Naive thymus-derived CD4-positive, alpha-beta T cell (primary cell): ENCODE measurements at regions of chr20 and their contacts with region 1.

Region 1: GRCh38 chr20:25195014-25195961 is at the start of gene ENTPD6:
- DNase-seq: peak; percentile 88 to 99 (median 94)
- ATAC-seq: peak; percentile 89
- H3K4me3 ChIP-seq: peak within 1 kb of the TSS; percentile 85
- H3K4me3 Mint-ChIP-seq: peak within 1 kb of the TSS; percentile 81 to 97 (median 92)
- H3K27ac ChIP-seq: peak within 1 kb of the TSS; percentile 91
- H3K27ac Mint-ChIP-seq: peak within 1 kb of the TSS; percentile 75 to 96 (median 93)
- H3K4me1 ChIP-seq: peaks cover 19 to 29% of the 10 kb centered on the region in 2 donors
- H3K4me1 Mint-ChIP-seq: peaks cover 23 to 56% (median 44%) of the 10 kb centered on the region in 7 donors
- H3K27me3 ChIP-seq: no peaks in the 10 kb centered on the region
- H3K27me3 Mint-ChIP-seq: peaks cover 0 to 6% (median 0%) of the 10 kb centered on the region in 5 donors
- total RNA-seq, gene ENTPD6: 41.1 to 108 (median 74.4) TPM

Region 2: DNA sequence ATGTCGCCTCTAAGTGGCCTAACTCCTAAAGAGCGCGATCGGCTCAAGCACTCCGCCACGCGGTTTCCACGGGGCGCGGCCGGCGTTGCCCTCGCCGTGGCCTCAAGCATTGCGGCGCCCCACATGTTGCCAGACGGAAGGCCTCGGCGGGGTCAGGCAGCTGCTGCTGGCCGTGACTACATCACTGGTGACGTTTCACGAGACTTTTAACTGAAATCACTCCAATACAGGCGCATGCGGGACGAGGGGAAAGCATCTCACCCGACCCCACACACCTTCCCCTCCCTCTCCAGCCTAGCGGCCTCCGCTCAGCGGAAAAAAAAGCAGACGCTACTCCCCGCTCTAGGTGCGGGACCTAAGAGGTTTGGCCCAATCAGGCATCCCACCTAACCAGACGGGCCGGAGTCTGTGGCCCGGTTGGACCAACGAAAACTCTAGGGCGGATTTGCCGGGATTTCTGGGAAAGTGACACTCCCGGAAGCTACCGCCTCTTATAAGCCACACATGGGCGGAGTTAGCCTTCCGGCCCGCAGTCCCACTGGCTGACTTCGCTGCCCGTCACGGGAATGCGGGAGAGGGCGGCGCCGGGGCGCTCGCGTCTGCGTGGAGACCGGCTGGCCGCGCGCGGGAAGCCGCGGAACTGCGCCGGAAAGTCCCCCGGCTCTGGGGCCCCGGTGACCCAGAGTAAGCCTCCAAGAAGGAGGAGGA is 1844.9 kb before region 1 on chr20 and contains the start of gene NXT1:
- CTCF ChIA-PET with region 1: no interaction called
- POLR2A ChIA-PET with region 1: no interaction called
- intact Hi-C with region 1: loop called in 1 of 2 experiments (anchors 2 kb)
- DNase-seq: peak; percentile 92 to 98 (median 95)
- ATAC-seq: peak; percentile 91
- H3K4me3 ChIP-seq: peak within 1 kb of the TSS; percentile 99
- H3K4me3 Mint-ChIP-seq: peak within 1 kb of the TSS; percentile 84 to 100 (median 98)
- H3K27ac ChIP-seq: peak within 1 kb of the TSS; percentile 99
- H3K27ac Mint-ChIP-seq: peak within 1 kb of the TSS; percentile 98 to 100 (median 100)
- H3K4me1 ChIP-seq: peaks cover 19 to 20% of the 10 kb centered on the region in 2 donors
- H3K4me1 Mint-ChIP-seq: peaks cover 12 to 36% (median 26%) of the 10 kb centered on the region in 7 donors
- H3K27me3 ChIP-seq: no peaks in the 10 kb centered on the region
- H3K27me3 Mint-ChIP-seq: peaks cover 0 to 2% (median 0%) of the 10 kb centered on the region in 5 donors
- total RNA-seq, gene NXT1: 20.1 to 63.4 (median 39.7) TPM

Region 3: GRCh38 chr20:25057234-25058050 is 137.8 kb before region 1 on chr20:
- CTCF ChIA-PET with region 1: no interaction called
- POLR2A ChIA-PET with region 1: interaction called, 7 read pairs
- intact Hi-C with region 1: loop called (anchors 1 to 5 kb)
- DNase-seq: peak; percentile 67 to 86 (median 74)
- ATAC-seq: peak; percentile 77
- H3K4me3 ChIP-seq: peak overlapping the region; percentile 86
- H3K4me3 Mint-ChIP-seq: peak overlapping the region; percentile 81 to 90 (median 88)
- H3K27ac ChIP-seq: peak overlapping the region; percentile 87
- H3K27ac Mint-ChIP-seq: peak overlapping the region; percentile 72 to 94 (median 88)
- H3K4me1 ChIP-seq: peaks cover 33 to 48% of the 10 kb centered on the region in 2 donors
- H3K4me1 Mint-ChIP-seq: peaks cover 38 to 63% (median 47%) of the 10 kb centered on the region in 7 donors
- H3K27me3 ChIP-seq: no peaks in the 10 kb centered on the region
- H3K27me3 Mint-ChIP-seq: peaks cover 0 to 29% (median 0%) of the 10 kb centered on the region in 5 donors

Region 4: DNA sequence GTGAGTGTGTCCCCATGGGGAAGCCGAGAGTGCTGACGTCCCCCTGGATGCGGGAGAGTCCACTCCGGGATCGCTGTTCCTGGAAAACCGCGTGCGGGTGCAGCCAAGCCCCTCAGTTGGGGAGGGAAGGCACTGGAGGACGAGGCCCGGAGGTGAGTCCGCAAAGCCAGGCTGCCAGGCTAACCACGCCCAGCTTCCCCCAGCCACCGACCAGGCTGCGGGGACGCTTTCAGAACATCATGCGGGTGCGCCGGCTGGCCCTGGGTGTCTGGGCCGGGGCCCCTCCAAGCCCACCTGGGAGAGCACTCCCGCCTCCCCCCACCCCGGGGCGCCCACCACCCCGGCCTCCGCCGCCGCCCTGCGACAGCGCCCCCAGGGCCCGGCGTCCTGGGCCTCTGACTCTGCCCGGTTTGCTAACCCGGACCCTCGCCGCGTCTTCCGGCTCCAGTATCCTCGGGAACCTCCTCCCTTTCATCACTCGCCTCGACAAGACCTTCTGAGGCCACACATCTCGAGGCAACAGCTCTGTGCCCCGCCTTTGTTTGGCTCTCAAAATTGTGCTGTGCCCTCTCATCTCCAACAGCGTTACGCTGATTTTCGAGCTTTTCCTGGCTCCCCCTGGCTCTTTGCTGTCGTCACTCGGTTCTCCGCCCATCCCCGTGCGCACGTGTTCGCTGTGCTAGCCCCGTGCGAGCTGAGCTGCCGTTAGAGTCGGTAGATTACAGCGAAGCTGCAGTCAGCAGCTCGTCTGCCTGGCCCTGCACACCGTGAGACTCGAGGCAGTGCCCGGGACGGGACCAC is 46.9 kb before region 1 on chr20:
- CTCF ChIA-PET with region 1: no interaction called
- POLR2A ChIA-PET with region 1: interaction called, 9 read pairs
- intact Hi-C with region 1: loop called in 1 of 2 experiments (anchors 2 kb)
- DNase-seq: peak; percentile 35 to 82 (median 79)
- ATAC-seq: peak; percentile 94
- H3K4me3 ChIP-seq: peak overlapping the region; percentile 65
- H3K4me3 Mint-ChIP-seq: peak overlapping the region; percentile 84 to 97 (median 90)
- H3K27ac ChIP-seq: peak overlapping the region; percentile 38
- H3K27ac Mint-ChIP-seq: peak overlapping the region in 8 of 9 donors; percentile 73 to 99 (median 90)
- H3K4me1 ChIP-seq: peaks cover 0 to 12% of the 10 kb centered on the region in 2 donors
- H3K4me1 Mint-ChIP-seq: peaks cover 5 to 7% (median 6%) of the 10 kb centered on the region in 7 donors
- H3K27me3 ChIP-seq: no peaks in the 10 kb centered on the region
- H3K27me3 Mint-ChIP-seq: peaks cover 4 to 30% (median 8%) of the 10 kb centered on the region in 5 donors

Region 5: DNA sequence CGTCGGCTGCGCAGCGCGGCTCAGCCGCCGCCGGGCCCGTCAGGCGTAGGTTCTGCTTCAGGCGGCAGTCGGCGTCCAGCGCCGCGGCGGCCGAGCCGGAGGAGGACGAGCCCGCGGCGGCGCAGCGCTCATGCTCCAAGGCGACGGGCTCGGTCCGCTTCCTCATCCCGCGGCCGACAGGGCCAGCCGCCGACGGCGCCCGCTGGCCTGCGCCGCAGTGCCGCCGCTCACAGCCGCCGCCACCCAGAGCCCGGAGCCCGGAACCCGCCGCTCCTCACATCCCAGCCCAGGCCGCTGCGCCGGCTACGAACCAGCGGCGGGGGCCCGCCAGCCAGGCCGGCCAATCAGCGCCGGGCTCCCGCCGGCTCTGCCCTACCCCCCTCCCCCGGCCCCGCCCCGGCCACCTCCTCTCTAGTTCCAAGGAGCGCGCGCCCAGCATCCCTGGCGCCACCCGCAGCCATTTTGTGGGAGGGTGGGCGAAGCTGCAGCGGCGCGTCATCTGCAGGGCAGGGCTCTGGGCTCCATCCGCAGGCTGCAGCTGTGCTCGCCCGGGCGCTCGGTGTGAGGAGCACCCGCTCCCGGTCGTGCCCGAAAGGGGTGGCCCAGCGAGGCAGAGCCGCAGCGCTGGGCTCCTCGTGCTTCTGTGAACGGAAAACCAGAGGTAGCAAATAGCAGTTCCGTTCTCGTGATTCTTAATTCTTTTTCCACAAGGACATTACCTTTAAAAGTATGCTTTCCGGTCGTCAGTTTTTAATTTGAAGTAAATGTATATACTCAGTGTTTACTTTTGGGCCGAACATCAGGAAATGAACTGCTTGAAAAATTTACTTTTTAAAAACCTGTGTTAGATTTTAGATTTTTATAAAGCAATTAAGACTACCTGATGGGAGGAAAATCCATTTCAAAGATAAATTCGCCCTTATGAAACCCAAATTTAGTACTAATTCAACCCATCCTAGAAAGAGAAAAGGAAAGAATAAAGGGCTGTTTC is 195.5 kb after region 1 on chr20 and contains the start of gene ABHD12:
- CTCF ChIA-PET with region 1: no interaction called
- POLR2A ChIA-PET with region 1: interaction called, 3 read pairs
- intact Hi-C with region 1: loop called (anchors 1 to 2 kb)
- DNase-seq: peak; percentile 80 to 93 (median 89)
- ATAC-seq: peak; percentile 96
- H3K4me3 ChIP-seq: peak within 1 kb of the TSS; percentile 62
- H3K4me3 Mint-ChIP-seq: peak within 1 kb of the TSS; percentile 83 to 94 (median 88)
- H3K27ac ChIP-seq: peak within 1 kb of the TSS; percentile 74
- H3K27ac Mint-ChIP-seq: peak within 1 kb of the TSS; percentile 46 to 96 (median 82)
- H3K4me1 ChIP-seq: no peaks in the 10 kb centered on the region
- H3K4me1 Mint-ChIP-seq: peaks cover 5 to 22% (median 18%) of the 10 kb centered on the region in 7 donors
- H3K27me3 ChIP-seq: no peaks in the 10 kb centered on the region
- H3K27me3 Mint-ChIP-seq: peaks cover 0 to 6% (median 0%) of the 10 kb centered on the region in 5 donors
- total RNA-seq, gene ABHD12: 16.5 to 27.6 (median 22.5) TPM

Region 6: DNA sequence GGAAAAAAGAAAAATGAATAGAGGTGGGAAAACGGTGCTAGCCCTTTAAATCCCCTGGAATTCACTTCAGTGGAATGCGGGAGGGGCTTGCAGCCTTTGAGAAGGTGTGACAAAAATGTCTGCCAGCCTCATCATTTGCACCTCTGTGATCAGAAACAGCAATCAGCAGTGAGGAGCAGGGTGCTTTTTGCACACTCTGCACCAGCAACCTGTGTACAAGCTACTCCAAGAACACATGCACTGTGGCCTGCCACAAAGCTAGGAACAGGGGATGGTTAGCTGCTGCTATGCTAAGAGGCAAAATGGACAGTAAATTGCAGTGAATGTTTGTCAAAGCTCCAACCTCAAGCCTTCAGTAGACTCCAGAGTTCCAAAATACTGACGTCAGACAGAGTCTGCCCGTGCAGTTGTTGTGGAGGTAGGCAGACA is 241.9 kb after region 1 on chr20:
- CTCF ChIA-PET with region 1: no interaction called
- POLR2A ChIA-PET with region 1: no interaction called
- intact Hi-C with region 1: no loop called
- DNase-seq: no peak
- ATAC-seq: no peak
- H3K4me3 ChIP-seq: no peak overlapping the region
- H3K4me3 Mint-ChIP-seq: no peak overlapping the region
- H3K27ac ChIP-seq: no peak overlapping the region
- H3K27ac Mint-ChIP-seq: no peak overlapping the region
- H3K4me1 ChIP-seq: no peaks in the 10 kb centered on the region
- H3K4me1 Mint-ChIP-seq: peaks cover 0 to 6% (median 3%) of the 10 kb centered on the region in 7 donors
- H3K27me3 ChIP-seq: no peaks in the 10 kb centered on the region
- H3K27me3 Mint-ChIP-seq: no peaks in the 10 kb centered on the region

Region 7: GRCh38 chr20:25496968-25497640 is 301.8 kb after region 1 on chr20:
- CTCF ChIA-PET with region 1: no interaction called
- POLR2A ChIA-PET with region 1: no interaction called
- intact Hi-C with region 1: no loop called
- DNase-seq: no peak
- ATAC-seq: no peak
- H3K4me3 ChIP-seq: no peak overlapping the region
- H3K4me3 Mint-ChIP-seq: no peak overlapping the region
- H3K27ac ChIP-seq: no peak overlapping the region
- H3K27ac Mint-ChIP-seq: peak overlapping the region in 1 of 9 donors; percentile 17
- H3K4me1 ChIP-seq: no peaks in the 10 kb centered on the region
- H3K4me1 Mint-ChIP-seq: no peaks in the 10 kb centered on the region
- H3K27me3 ChIP-seq: no peaks in the 10 kb centered on the region
- H3K27me3 Mint-ChIP-seq: no peaks in the 10 kb centered on the region

Region 8: GRCh38 chr20:25623736-25624499 is 428.6 kb after region 1 on chr20 and contains the start of gene NANP:
- CTCF ChIA-PET with region 1: no interaction called
- POLR2A ChIA-PET with region 1: no interaction called
- intact Hi-C with region 1: loop called in 1 of 2 experiments (anchors 5 kb)
- DNase-seq: peak; percentile 62 to 92 (median 73)
- ATAC-seq: peak; percentile 86
- H3K4me3 ChIP-seq: peak within 1 kb of the TSS; percentile 96
- H3K4me3 Mint-ChIP-seq: peak within 1 kb of the TSS; percentile 86 to 96 (median 94)
- H3K27ac ChIP-seq: peak within 1 kb of the TSS; percentile 70
- H3K27ac Mint-ChIP-seq: peak within 1 kb of the TSS; percentile 78 to 96 (median 90)
- H3K4me1 ChIP-seq: peaks cover 0 to 12% of the 10 kb centered on the region in 2 donors
- H3K4me1 Mint-ChIP-seq: peaks cover 14 to 34% (median 18%) of the 10 kb centered on the region in 7 donors
- H3K27me3 ChIP-seq: no peaks in the 10 kb centered on the region
- H3K27me3 Mint-ChIP-seq: peaks cover 0 to 3% (median 0%) of the 10 kb centered on the region in 5 donors
- total RNA-seq, gene NANP: 1.0 to 7.0 (median 1.9) TPM